CD4-positive, alpha-beta T cell (primary cell): ENCODE measurements at regions of chr2 and their contacts with region 1.

Region 1: DNA sequence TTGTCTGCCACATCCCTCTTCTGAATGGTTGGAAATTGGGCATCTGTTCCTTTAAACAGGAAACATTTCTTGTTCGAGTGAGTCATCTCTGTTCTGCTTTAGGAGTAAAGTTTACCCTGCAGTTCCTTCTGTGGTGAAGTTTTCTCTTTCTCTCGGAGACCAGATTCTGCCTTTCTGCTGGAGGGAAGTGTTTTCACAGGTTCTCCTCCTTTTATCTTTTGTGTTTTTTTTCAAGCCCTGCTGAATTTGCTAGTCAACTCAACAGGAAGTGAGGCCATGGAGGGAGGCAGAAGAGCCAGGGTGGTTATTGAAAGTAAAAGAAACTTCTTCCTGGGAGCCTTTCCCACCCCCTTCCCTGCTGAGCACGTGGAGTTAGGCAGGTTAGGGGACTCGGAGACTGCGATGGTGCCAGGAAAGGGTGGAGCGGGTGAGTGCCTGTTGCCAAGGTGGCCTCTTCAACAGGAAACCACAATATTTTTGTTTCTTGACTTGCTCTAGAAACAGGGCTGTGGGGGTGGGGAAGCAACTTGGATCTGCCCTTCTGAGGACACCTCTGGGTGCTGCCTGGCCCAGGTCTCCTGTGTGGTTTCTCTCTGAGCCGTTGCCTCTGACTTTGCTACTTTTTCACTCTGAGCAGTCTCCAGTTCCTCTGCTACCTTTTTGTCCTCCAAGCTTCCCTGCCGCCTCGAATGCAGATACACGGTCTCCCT is 2.2 kb upstream of the CASP8 start:
- DNase-seq: peak; percentile 90 to 99 (median 95)
- ATAC-seq: peak; percentile 71
- H3K4me3 ChIP-seq: peak overlapping the region; percentile 62
- H3K4me3 Mint-ChIP-seq: peak overlapping the region; percentile 89
- H3K27ac ChIP-seq: peak overlapping the region; percentile 93 to 100
- H3K27ac Mint-ChIP-seq: peak overlapping the region; percentile 97
- H3K4me1 ChIP-seq: peaks cover 74% of the 10 kb centered on the region
- H3K4me1 Mint-ChIP-seq: peaks cover 75% of the 10 kb centered on the region
- H3K27me3 ChIP-seq: no peaks in the 10 kb centered on the region
- H3K27me3 Mint-ChIP-seq: no peaks in the 10 kb centered on the region
- CTCF ChIP-seq: no peak

Region 2: DNA sequence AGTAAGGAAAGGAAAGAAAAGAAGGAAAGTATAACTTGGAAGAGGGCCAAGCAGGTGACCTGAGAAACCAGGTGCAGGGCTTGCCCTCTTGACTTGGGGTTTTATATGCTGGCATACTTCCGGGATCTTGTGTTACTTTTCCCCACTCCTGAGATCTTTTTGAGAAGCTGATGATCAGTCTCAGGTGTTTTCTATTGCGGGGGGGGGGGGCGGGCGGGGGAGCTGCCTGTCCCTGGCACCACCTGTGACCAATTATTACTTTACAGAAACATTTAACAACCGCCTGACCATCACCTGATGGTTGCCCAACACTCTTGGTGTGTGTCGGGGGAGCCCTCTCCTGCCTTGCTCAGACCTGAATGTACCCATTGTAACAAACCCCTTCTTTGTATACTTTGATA is 82.0 kb before region 1 on chr2:
- CTCF ChIA-PET with region 1: no interaction called
- POLR2A ChIA-PET with region 1: no interaction called
- intact Hi-C with region 1: no loop called
- DNase-seq: no peak
- ATAC-seq: no peak
- H3K4me3 ChIP-seq: no peak overlapping the region
- H3K4me3 Mint-ChIP-seq: no peak overlapping the region
- H3K27ac ChIP-seq: no peak overlapping the region
- H3K27ac Mint-ChIP-seq: no peak overlapping the region
- H3K4me1 ChIP-seq: peaks cover 14% of the 10 kb centered on the region
- H3K4me1 Mint-ChIP-seq: peaks cover 7% of the 10 kb centered on the region
- H3K27me3 ChIP-seq: no peaks in the 10 kb centered on the region
- H3K27me3 Mint-ChIP-seq: no peaks in the 10 kb centered on the region
- CTCF ChIP-seq: no peak

Region 3: GRCh38 chr2:201242571-201243277 is 15.4 kb before region 1 on chr2:
- CTCF ChIA-PET with region 1: interaction called, 15 read pairs
- POLR2A ChIA-PET with region 1: interaction called, 39 read pairs
- intact Hi-C with region 1: loop called in 1 of 2 experiments (anchors 2 kb)
- DNase-seq: no peak
- ATAC-seq: no peak
- H3K4me3 ChIP-seq: no peak overlapping the region
- H3K4me3 Mint-ChIP-seq: no peak overlapping the region
- H3K27ac ChIP-seq: peak overlapping the region in 1 of 2 donors; percentile 3
- H3K27ac Mint-ChIP-seq: peak overlapping the region; percentile 69
- H3K4me1 ChIP-seq: peaks cover 37% of the 10 kb centered on the region
- H3K4me1 Mint-ChIP-seq: peaks cover 67% of the 10 kb centered on the region
- H3K27me3 ChIP-seq: no peaks in the 10 kb centered on the region
- H3K27me3 Mint-ChIP-seq: no peaks in the 10 kb centered on the region
- CTCF ChIP-seq: no peak

Region 4: GRCh38 chr2:201270293-201271001 is 12.3 kb after region 1 on chr2:
- CTCF ChIA-PET with region 1: interaction called, 3 read pairs
- POLR2A ChIA-PET with region 1: interaction called, 38 read pairs
- intact Hi-C with region 1: no loop called
- DNase-seq: no peak
- ATAC-seq: no peak
- H3K4me3 ChIP-seq: no peak overlapping the region
- H3K4me3 Mint-ChIP-seq: peak overlapping the region; percentile 38
- H3K27ac ChIP-seq: no peak overlapping the region
- H3K27ac Mint-ChIP-seq: peak overlapping the region; percentile 75
- H3K4me1 ChIP-seq: peaks cover 80% of the 10 kb centered on the region
- H3K4me1 Mint-ChIP-seq: peaks cover 86% of the 10 kb centered on the region
- H3K27me3 ChIP-seq: no peaks in the 10 kb centered on the region
- H3K27me3 Mint-ChIP-seq: no peaks in the 10 kb centered on the region
- CTCF ChIP-seq: no peak

Region 5: GRCh38 chr2:201275990-201276389 is 17.9 kb after region 1 on chr2:
- CTCF ChIA-PET with region 1: interaction called, 3 read pairs
- POLR2A ChIA-PET with region 1: interaction called, 15 read pairs
- intact Hi-C with region 1: loop called (anchors 2 kb)
- DNase-seq: no peak
- ATAC-seq: no peak
- H3K4me3 ChIP-seq: no peak overlapping the region
- H3K4me3 Mint-ChIP-seq: no peak overlapping the region
- H3K27ac ChIP-seq: no peak overlapping the region
- H3K27ac Mint-ChIP-seq: peak overlapping the region; percentile 70
- H3K4me1 ChIP-seq: peaks cover 37% of the 10 kb centered on the region
- H3K4me1 Mint-ChIP-seq: peaks cover 72% of the 10 kb centered on the region
- H3K27me3 ChIP-seq: no peaks in the 10 kb centered on the region
- H3K27me3 Mint-ChIP-seq: no peaks in the 10 kb centered on the region
- CTCF ChIP-seq: no peak

Region 6: DNA sequence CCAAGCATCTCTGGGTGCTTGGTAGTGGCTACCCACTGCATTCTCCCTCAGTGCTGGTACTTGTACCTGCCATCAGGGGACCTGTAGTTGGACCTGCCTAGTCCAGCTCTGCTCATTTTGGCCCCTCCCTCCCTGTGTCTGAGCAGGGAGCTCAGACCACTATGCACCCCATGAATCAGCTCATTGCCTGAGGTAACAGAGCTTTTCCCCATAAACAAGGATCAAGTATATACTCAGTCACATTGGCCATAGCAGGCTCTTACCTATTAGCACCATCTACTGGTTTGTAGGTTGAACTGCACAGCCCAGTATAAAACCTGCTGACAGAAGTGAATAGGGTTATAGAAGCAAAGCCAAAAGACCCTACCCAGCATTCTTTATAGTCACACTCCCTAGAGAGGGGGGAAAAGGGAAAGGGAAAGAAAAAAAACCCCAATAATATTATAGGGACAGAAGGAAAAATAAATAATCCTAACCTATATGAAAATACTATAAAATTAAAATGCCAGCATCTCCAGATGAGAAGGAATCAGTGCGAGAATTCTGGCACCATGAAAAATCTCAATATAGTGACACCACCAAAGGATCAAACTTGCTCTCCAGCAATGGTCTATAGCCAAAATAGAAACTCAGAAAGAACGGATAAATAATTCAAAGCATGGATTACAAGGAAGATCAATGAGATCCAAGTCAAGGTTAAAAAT is 105.9 kb after region 1 on chr2:
- CTCF ChIA-PET with region 1: interaction called, 12 read pairs
- POLR2A ChIA-PET with region 1: interaction called, 7 read pairs
- intact Hi-C with region 1: loop called in 1 of 2 experiments (anchors 1 kb)
- DNase-seq: peak in 7 of 14 experiments; percentile 3 to 75 (median 48)
- ATAC-seq: peak; percentile 97
- H3K4me3 ChIP-seq: no peak overlapping the region
- H3K4me3 Mint-ChIP-seq: no peak overlapping the region
- H3K27ac ChIP-seq: no peak overlapping the region
- H3K27ac Mint-ChIP-seq: peak overlapping the region; percentile 28
- H3K4me1 ChIP-seq: peaks cover 17% of the 10 kb centered on the region
- H3K4me1 Mint-ChIP-seq: peaks cover 36% of the 10 kb centered on the region
- H3K27me3 ChIP-seq: no peaks in the 10 kb centered on the region
- H3K27me3 Mint-ChIP-seq: no peaks in the 10 kb centered on the region
- CTCF ChIP-seq: peak; percentile 95